ENCODE measurements at regions of chr6 and their contacts with region 1.

Region 1: DNA sequence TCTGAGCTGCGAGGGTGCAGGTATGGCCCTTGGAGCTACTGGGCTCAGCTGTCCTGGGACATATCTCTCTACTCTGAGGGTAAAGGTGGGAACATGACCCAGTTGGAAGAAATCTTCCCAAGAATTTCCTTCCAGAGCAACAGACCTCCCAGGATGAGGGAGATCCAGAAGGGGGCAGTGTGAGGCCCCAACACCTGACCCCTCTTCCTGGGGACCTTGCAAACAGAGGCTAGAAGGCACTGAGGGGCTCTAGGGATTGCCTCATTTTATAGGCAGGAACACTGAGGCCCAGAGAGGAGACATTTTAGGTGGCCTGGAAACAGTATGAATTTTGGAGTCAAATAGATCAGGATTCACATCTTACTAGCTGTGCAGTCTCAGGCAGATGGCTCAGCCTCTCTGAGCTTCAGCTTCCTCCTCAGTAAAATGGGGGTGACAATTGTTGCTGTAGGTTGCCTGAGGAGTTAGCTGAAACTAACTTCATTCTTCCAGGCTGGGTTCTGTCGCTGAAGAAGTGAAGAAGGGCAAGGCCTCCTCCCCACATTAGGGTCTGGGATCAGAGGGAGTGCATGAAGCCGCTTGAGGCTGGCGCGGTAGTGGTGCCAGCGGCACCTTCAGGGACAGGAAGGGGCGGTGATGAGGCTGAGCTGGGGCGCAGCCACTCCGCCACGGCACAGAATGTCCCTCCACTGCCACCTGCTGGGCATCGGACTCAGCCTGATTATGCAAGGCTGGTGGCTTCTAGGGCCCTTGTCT is 11.4 kb downstream of the KCNK17 start:
- DNase-seq: peak; percentile 39
- ATAC-seq: peak; percentile 99
- H3K4me3 ChIP-seq: no peak overlapping the region
- H3K27ac ChIP-seq: no peak overlapping the region
- H3K4me1 ChIP-seq: 0 out of 2 replicates have a peak, but pooled peaks cover 2% of the 10 kb centered on the region
- H3K27me3 ChIP-seq: peaks cover 0 to 3% of the 10 kb centered on the region in 2 experiments; a peak in 3 of 4 replicates
- CTCF ChIP-seq: peak; percentile 86 to 97 (median 92); a peak in 5 of 6 replicates
- EP300 ChIP-seq: no peak
- POLR2A ChIP-seq: no peak
- RAD21 ChIP-seq: peak; percentile 78

Region 2: DNA sequence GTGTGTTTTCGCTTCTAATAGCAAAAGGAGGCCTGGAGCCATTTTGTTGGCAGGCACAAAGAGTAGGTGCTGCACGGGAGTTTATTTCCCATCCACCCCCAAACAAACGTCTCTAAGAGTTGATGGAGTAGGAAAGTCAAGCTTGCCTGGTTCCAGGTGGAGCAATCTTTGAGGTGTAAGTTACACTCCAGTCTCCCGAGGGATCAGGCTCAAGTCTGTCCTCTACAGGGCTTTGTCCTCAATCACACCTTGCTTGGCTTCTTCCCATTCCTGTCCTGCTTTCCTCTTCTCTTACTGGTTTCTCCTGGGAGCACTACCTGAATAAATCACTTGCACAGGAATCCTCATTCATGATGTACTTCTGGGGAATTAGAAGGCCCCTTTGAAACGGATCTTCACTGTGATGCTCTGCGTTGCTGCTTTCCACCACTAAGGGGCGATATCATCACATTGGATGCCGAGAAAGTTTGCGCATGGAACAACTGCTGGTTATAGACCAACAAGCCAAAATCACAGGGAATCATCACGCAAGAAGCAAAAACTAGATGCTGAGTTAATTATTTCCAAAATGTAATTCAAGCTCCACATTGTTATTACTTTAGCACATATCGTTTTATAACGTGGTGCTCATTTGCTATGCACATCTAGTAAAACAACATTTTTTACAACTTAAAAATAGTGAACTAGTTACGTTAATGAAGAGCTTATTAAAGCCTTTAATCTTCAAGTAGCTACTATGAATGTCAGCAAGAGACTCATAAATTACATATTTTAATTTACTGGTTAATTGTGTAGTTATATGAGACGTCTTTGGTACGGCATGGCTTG is 430.9 kb before region 1 on chr6:
- CTCF ChIA-PET with region 1: interaction called, 19 read pairs
- POLR2A ChIA-PET with region 1: no interaction called
- RAD21 ChIA-PET with region 1: interaction called, 5 read pairs
- SMC1A ChIA-PET with region 1: interaction called, 11 read pairs
- in situ Hi-C with region 1: loop called (anchors 5 kb)
- intact Hi-C with region 1: loop called (anchors 5 kb)
- DNase-seq: no peak
- ATAC-seq: peak; percentile 66
- H3K4me3 ChIP-seq: no peak overlapping the region
- H3K27ac ChIP-seq: no peak overlapping the region
- H3K4me1 ChIP-seq: no peaks in the 10 kb centered on the region
- H3K27me3 ChIP-seq: no peaks in the 10 kb centered on the region
- CTCF ChIP-seq: peak; percentile 76 to 92 (median 90)
- EP300 ChIP-seq: no peak
- POLR2A ChIP-seq: no peak
- RAD21 ChIP-seq: peak; percentile 85

Region 3: GRCh38 chr6:38973178-38974054 is 329.4 kb before region 1 on chr6:
- CTCF ChIA-PET with region 1: interaction called, 12 read pairs
- POLR2A ChIA-PET with region 1: no interaction called
- RAD21 ChIA-PET with region 1: interaction called, 7 read pairs
- SMC1A ChIA-PET with region 1: interaction called, 3 read pairs
- in situ Hi-C with region 1: loop called (anchors 5 kb)
- intact Hi-C with region 1: loop called (anchors 1 kb)
- DNase-seq: peak; percentile 9
- ATAC-seq: peak; percentile 88
- H3K4me3 ChIP-seq: no peak overlapping the region
- H3K27ac ChIP-seq: no peak overlapping the region
- H3K4me1 ChIP-seq: no peaks in the 10 kb centered on the region
- H3K27me3 ChIP-seq: no peaks in the 10 kb centered on the region; a peak in 1 of 4 replicates
- CTCF ChIP-seq: peak; percentile 62 to 71 (median 64)
- EP300 ChIP-seq: no peak
- POLR2A ChIP-seq: no peak
- RAD21 ChIP-seq: peak; percentile 61

Region 4: DNA sequence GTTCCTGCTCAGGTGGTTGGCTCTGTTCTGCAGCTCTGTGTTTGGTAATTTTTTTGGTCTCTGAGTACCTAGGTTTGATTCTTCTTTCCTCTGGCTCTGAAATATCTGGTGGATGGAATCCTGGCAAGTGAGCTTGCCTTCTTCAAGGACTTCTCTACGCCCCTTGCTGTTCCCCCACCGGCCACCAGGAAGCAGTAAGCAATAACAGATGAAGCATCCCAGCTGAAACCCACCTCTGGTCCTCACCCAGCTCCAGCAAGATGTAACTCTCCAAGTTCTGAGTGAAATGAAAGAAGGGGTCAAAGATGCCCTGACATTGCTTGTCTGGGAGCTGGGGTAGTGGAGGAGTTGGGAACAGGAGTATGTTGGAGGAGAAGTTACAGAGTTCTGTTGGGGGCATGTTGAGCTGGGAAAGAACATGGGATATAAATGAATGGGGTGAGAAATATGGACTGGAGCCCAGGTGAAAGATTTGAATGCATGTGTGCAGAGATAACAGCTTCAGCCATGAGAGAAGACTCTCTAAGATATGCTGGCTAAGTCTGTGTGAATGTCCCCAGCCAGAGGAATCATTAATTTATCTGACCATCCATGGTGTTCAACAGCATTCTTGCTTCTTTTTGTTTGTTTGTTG is 305.6 kb before region 1 on chr6:
- CTCF ChIA-PET with region 1: interaction called, 18 read pairs
- POLR2A ChIA-PET with region 1: no interaction called
- RAD21 ChIA-PET with region 1: interaction called, 14 read pairs
- SMC1A ChIA-PET with region 1: interaction called, 10 read pairs
- in situ Hi-C with region 1: no loop called
- intact Hi-C with region 1: loop called (anchors 5 kb)
- DNase-seq: no peak
- ATAC-seq: peak; percentile 51
- H3K4me3 ChIP-seq: no peak overlapping the region
- H3K27ac ChIP-seq: no peak overlapping the region
- H3K4me1 ChIP-seq: no peaks in the 10 kb centered on the region
- H3K27me3 ChIP-seq: no peaks in the 10 kb centered on the region
- CTCF ChIP-seq: peak; percentile 64 to 68 (median 64)
- EP300 ChIP-seq: no peak
- POLR2A ChIP-seq: no peak
- RAD21 ChIP-seq: peak; percentile 70

Region 5: DNA sequence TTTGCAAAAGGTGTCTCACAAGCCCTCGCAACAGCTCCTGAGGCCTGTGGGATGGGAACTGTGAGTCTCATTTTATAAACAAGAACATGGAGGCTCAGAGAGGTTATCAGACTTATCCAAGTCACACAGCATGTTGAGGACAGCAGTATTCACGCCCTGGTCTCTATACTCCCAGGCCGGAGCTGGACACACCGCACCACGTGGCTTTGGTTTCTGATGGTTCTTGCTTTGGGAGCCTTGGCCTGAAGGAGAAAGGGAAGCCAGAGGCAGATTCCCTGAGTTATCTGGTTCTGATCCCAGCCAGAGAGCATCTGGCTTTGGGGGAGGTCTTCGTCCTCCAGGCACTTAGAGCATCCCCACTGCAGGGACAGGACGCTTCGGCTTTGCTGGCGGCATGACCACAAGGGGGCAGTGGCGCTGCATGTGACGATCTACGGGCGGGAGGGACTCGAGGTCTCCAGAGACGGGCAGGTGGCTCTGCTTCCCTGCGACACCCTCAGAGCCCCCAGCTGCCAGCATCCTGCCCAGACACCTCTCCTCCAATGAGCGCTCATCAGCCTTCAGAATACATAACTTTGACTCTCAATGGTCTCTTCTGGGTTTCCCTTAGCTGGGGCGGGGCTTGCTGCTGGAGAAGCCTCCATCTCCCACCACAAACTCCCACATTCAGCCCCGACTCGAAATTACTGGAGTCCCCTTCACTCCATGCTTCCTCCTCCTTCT is 136.5 kb before region 1 on chr6:
- CTCF ChIA-PET with region 1: interaction called, 167 read pairs
- POLR2A ChIA-PET with region 1: no interaction called
- RAD21 ChIA-PET with region 1: interaction called, 71 read pairs
- SMC1A ChIA-PET with region 1: interaction called, 83 read pairs
- in situ Hi-C with region 1: loop called (anchors 5 kb)
- intact Hi-C with region 1: loop called (anchors 1 kb)
- DNase-seq: peak; percentile 20
- ATAC-seq: peak; percentile 99
- H3K4me3 ChIP-seq: no peak overlapping the region
- H3K27ac ChIP-seq: no peak overlapping the region
- H3K4me1 ChIP-seq: no peaks in the 10 kb centered on the region
- H3K27me3 ChIP-seq: peaks cover 2 to 3% of the 10 kb centered on the region in 2 experiments; a peak in 3 of 4 replicates
- CTCF ChIP-seq: peak; percentile 88 to 95 (median 90)
- EP300 ChIP-seq: no peak
- POLR2A ChIP-seq: no peak
- RAD21 ChIP-seq: peak; percentile 91

Region 6: DNA sequence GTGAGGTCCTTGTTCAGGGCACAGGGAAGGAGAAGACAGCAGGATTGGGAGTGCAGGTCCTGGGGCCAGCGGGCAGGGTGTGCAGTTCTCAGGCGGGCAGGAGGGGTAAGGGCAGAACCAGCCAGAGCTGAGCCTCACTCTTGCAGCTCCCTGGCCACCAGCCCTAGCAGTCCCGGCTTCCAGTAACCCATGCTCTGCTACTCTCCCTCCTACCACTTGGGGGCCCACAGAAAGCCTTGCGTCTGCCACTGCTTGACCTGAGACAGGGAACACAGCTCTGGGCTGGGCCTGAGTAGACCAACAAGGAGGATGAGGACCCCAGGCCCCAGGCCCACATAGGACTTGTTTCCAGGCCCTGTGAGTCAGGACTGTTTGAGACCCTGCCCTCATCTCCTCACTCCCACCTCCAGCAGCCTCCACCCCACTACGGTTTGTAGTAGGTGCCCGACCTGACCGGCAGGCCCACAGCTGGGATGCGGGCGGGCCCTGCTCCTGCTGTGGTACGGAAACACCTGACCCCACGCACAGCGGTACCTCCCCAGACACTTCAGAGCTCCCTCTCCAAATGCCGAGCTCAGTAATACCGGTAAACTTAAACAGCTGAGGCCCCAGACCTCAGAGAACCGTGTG is 112.8 kb before region 1 on chr6:
- CTCF ChIA-PET with region 1: interaction called, 32 read pairs
- POLR2A ChIA-PET with region 1: no interaction called
- RAD21 ChIA-PET with region 1: interaction called, 13 read pairs
- SMC1A ChIA-PET with region 1: interaction called, 9 read pairs
- in situ Hi-C with region 1: no loop called
- intact Hi-C with region 1: loop called (anchors 2 kb)
- DNase-seq: no peak
- ATAC-seq: peak; percentile 98
- H3K4me3 ChIP-seq: no peak overlapping the region
- H3K27ac ChIP-seq: no peak overlapping the region
- H3K4me1 ChIP-seq: no peaks in the 10 kb centered on the region
- H3K27me3 ChIP-seq: no peaks in the 10 kb centered on the region
- CTCF ChIP-seq: peak; percentile 56 to 74 (median 57)
- EP300 ChIP-seq: no peak
- POLR2A ChIP-seq: no peak
- RAD21 ChIP-seq: peak; percentile 53

Region 7: DNA sequence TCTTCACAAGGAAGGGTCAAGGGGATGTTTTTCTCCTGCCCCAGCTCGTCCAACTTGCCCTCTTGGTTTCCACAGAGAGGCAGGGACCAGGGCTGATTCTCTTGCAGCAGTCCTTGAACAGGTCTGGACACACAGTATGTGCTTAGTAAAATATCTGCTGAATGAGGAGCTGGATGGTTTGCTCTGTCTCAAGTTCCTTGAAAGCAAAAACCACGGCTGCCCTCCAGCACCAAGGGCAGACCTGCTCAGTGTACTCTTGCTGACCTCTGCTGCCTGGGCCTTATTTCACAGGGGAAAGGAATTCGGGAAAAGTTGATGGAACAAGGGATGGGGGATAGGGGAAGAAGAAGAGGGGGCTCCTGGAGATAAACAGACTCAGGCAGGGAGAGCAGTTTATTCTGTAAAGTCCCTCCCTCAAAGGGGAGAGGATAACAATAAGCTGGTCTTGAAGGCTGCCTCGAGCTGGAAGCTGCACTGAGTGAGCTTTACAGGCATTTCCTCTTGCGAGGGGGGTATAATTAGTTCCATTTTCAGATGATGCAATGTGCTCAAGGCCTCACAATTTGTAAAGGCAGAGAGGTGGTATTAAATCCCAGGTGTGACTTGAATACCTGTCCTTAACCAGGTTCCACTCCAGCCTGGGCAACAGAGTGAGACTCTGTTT is 83.8 kb before region 1 on chr6:
- CTCF ChIA-PET with region 1: interaction called, 12 read pairs
- POLR2A ChIA-PET with region 1: no interaction called
- RAD21 ChIA-PET with region 1: interaction called, 6 read pairs
- SMC1A ChIA-PET with region 1: interaction called, 5 read pairs
- in situ Hi-C with region 1: no loop called
- intact Hi-C with region 1: no loop called
- DNase-seq: no peak
- ATAC-seq: peak; percentile 49
- H3K4me3 ChIP-seq: no peak overlapping the region
- H3K27ac ChIP-seq: peak overlapping the region; percentile 35
- H3K4me1 ChIP-seq: peaks cover 19% of the 10 kb centered on the region
- H3K27me3 ChIP-seq: no peaks in the 10 kb centered on the region
- CTCF ChIP-seq: peak in 1 of 3 experiments; percentile 21; a peak in 1 of 6 replicates
- EP300 ChIP-seq: no peak
- POLR2A ChIP-seq: no peak
- RAD21 ChIP-seq: no peak